Thyroid gland (tissue), 4 donors: ENCODE measurements at regions of chr9 and their contacts with region 1.

Region 1: GRCh38 chr9:131046581-131047202 is 37.7 kb downstream of the LAMC3 start:
- DNase-seq: peak; percentile 64 to 67
- H3K4me3 ChIP-seq: no peak overlapping the region
- H3K27ac ChIP-seq: no peak overlapping the region
- H3K4me1 ChIP-seq: no peaks in the 10 kb centered on the region
- H3K27me3 ChIP-seq: no peaks in the 10 kb centered on the region
- CTCF ChIP-seq: peak; percentile 70 to 91 (median 81)
- POLR2A ChIP-seq: no peak

Region 2: DNA sequence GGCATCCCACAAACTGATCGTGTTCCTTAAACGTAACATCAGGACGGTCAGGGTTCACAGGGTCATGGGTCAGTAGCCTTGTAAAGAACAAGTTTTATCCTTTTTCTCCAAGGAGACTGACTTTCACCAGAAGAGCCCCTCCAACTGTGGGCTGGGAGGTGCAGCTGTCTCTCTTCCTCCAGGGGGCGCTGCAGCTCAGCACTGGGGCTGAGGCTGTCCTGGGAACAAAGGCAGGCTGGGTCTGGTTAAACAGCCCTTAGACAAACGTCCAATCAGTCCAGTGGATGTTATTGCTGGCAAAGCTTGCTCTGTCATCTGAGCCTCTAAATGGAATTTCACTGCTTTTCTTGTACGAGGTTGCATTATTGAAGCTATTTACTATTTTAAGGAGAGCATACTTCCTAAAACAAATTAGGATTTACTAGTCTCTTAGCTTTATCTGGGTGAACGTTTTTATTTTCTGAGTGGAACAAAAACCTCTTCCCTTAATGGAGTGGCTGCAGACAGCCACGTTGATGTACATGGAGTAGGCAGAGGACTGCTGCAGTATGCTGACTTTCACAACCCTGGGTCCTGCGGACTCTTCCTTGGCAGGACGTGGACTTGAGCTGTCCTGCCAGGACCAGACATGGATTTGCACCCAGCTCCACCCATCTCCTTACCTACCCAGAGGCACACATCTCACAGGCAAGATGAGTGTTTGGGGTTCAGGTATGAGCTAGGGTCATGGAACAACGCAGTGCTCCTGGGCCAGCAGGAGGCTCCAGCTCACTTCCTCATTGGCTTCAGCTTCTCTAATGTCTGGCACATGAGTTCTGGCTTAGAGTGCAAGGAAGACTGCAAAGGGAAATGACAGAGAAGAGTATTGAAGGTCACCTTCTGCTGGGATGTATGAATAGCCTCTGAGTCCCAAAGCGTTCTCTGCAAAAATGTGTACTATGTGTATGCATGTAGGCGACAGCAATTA is 345.4 kb before region 1 on chr9:
- intact Hi-C with region 1: loop called (anchors 5 kb)
- DNase-seq: peak; percentile 82 to 88
- H3K4me3 ChIP-seq: no peak overlapping the region
- H3K27ac ChIP-seq: peak overlapping the region in 1 of 3 donors; percentile 47
- H3K4me1 ChIP-seq: peaks cover 0 to 7% of the 10 kb centered on the region in 2 donors
- H3K27me3 ChIP-seq: no peaks in the 10 kb centered on the region
- CTCF ChIP-seq: peak; percentile 78 to 95 (median 90)
- POLR2A ChIP-seq: no peak

Region 3: DNA sequence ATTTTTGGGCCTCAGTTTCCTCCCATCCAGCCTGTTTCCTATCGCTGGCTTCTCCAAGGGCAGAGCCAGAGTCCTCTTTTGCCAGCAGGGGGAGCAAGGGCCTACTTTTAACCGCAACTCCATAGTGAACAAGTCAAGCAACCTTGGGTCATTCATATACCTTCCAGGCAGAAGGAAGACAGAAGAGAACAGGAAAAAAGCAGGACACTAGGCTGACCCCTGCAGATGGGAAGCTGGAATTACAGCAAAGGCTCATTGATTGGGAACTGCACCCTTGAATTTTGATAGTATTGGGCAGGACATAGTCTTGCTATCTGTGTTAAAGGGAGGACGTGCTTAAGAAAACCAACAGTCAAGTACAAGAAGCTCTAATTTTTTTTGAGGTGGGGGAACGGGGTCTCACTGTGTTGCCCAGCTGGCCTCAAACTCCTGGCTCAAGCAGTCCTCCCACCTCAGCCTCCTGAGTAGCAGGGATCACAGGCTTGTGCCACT is 180.2 kb before region 1 on chr9:
- intact Hi-C with region 1: loop called (anchors 10 kb)
- DNase-seq: peak; percentile 68 to 72
- H3K4me3 ChIP-seq: no peak overlapping the region
- H3K27ac ChIP-seq: no peak overlapping the region
- H3K4me1 ChIP-seq: peaks cover 24 to 43% of the 10 kb centered on the region in 2 donors
- H3K27me3 ChIP-seq: no peaks in the 10 kb centered on the region
- CTCF ChIP-seq: peak; percentile 52 to 75 (median 68)
- POLR2A ChIP-seq: no peak

Region 4: GRCh38 chr9:131334629-131335367 is 288.1 kb after region 1 on chr9:
- intact Hi-C with region 1: loop called (anchors 10 kb)
- DNase-seq: no peak
- H3K4me3 ChIP-seq: no peak overlapping the region
- H3K27ac ChIP-seq: no peak overlapping the region
- H3K4me1 ChIP-seq: no peaks in the 10 kb centered on the region
- H3K27me3 ChIP-seq: no peaks in the 10 kb centered on the region
- CTCF ChIP-seq: no peak
- POLR2A ChIP-seq: no peak